ENCODE measurements at regions of chr11 and their contacts with region 1.

Region 1: DNA sequence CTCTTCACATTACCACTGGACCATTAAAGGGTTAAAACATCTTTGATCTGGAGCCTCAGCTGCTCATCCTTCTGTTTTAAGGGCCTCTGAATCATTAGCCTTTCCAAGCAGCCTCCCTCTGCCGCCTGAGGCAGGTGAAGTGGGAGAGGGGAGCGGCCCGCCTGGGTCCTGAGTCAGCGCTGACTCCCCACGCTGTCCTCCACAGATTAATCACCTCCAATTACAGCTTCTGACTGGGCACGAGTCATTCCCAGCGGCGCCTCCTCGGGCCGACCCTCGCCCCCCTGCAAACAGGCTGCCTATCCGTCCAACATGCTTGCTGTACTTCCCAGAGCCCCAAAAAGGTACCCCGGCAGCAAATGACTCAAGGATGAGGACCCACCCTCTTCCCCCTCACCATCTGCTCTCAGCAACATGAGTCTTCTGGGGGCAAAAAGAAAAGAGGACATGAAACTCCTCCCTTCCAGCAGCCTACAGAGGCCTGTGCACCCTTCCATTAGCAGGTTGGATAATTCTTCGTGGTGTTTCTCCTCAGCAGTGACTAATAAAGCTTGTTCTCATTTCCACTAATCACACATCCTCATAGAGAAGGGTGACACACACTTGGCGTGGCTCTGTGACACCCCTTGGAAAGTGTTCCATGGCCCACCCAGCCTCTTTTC is 44.3 kb upstream of the JAM3 start:
- DNase-seq: no peak
- ATAC-seq: no peak
- H3K4me3 ChIP-seq: no peak overlapping the region
- H3K27ac ChIP-seq: no peak overlapping the region
- H3K4me1 ChIP-seq: no peaks in the 10 kb centered on the region
- H3K27me3 ChIP-seq: no peaks in the 10 kb centered on the region
- CTCF ChIP-seq: no peak
- POLR2A ChIP-seq: no peak

Region 2: DNA sequence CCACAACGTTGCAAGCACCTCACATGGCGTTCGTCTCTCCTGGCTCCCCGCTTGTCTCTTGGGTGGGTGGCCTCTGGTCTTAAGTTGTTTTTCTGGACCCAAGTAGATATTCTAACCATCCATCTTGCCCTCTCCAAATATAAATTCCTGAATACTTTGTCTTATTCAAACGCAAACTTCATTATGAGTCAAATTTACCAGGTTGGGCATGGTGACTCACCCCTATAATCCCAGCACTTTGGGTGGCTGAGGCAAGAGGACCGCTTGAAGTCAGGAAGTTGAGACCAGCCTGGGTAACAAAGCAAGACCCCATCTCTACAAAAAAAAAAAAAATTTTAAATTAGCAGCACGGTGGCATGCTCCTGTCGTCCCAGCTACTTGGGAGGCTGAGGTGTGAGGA is 62.7 kb before region 1 on chr11:
- intact Hi-C with region 1: loop called (anchors 5 kb)
- DNase-seq: no peak
- ATAC-seq: no peak
- H3K4me3 ChIP-seq: no peak overlapping the region
- H3K27ac ChIP-seq: no peak overlapping the region
- H3K4me1 ChIP-seq: peaks cover 13% of the 10 kb centered on the region
- H3K27me3 ChIP-seq: no peaks in the 10 kb centered on the region
- CTCF ChIP-seq: no peak
- POLR2A ChIP-seq: no peak

Region 3: GRCh38 chr11:133974836-133975487 is 49.6 kb before region 1 on chr11:
- intact Hi-C with region 1: loop called (anchors 5 kb)
- DNase-seq: no peak
- ATAC-seq: no peak
- H3K4me3 ChIP-seq: no peak overlapping the region
- H3K27ac ChIP-seq: no peak overlapping the region
- H3K4me1 ChIP-seq: no peaks in the 10 kb centered on the region
- H3K27me3 ChIP-seq: no peaks in the 10 kb centered on the region
- CTCF ChIP-seq: no peak
- POLR2A ChIP-seq: no peak

Measured in body of pancreas (tissue), 4 donors.